ENCODE measurements at regions of chr1 and their contacts with region 1.

Region 1: GRCh38 chr1:217673387-217673786 is 42.2 kb downstream of the SPATA17 start:
- H3K4me3 Mint-ChIP-seq: no peak overlapping the region
- H3K27ac Mint-ChIP-seq: peak overlapping the region; percentile 74
- H3K4me1 Mint-ChIP-seq: peaks cover 40% of the 10 kb centered on the region
- H3K27me3 Mint-ChIP-seq: peaks cover 4% of the 10 kb centered on the region

Region 2: GRCh38 chr1:217617126-217617525 is 56.3 kb before region 1 on chr1:
- intact Hi-C with region 1: loop called (anchors 5 kb)
- H3K4me3 Mint-ChIP-seq: no peak overlapping the region
- H3K27ac Mint-ChIP-seq: no peak overlapping the region
- H3K4me1 Mint-ChIP-seq: peaks cover 14% of the 10 kb centered on the region
- H3K27me3 Mint-ChIP-seq: no peaks in the 10 kb centered on the region

Region 3: GRCh38 chr1:217634711-217635110 is 38.7 kb before region 1 on chr1:
- intact Hi-C with region 1: no loop called
- H3K4me3 Mint-ChIP-seq: no peak overlapping the region
- H3K27ac Mint-ChIP-seq: no peak overlapping the region
- H3K4me1 Mint-ChIP-seq: peaks cover 13% of the 10 kb centered on the region
- H3K27me3 Mint-ChIP-seq: peaks cover 11% of the 10 kb centered on the region

Region 4: DNA sequence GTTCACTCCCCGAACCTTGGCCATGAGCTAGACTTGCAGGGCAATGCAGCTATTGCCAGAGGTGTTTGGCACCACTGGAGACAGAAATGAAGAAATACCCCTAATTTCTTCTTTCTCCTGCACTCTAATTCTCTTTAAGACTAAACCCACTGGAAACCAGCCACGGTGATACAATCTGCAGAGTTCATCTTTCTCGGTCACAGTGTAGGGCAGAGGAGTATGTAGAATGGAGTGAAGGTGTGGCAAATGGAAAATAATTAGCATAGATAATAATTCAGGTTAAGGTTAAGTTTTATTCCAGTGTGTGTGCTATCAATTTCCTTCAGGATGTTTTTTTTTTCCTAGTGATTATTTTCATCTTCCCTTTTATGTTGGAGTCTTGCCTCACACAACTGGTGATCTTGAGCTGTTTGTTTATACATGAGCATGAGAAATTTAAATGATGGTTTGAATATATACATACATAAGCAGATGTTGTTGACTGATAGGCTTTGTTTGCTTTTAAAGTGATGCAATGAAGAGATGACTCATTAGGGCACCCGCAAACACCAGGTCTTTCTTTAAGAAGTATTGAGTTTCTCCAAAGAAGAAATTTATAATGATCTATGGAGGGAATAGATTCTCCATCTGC is 39.7 kb after region 1 on chr1:
- intact Hi-C with region 1: no loop called
- H3K4me3 Mint-ChIP-seq: no peak overlapping the region
- H3K27ac Mint-ChIP-seq: no peak overlapping the region
- H3K4me1 Mint-ChIP-seq: no peaks in the 10 kb centered on the region
- H3K27me3 Mint-ChIP-seq: no peaks in the 10 kb centered on the region

Measured in dendritic cell treated with granulocyte-macrophage colony-stimulating factor and Interleukin-4, amounts not matched to agents 40 ng/mL and 50 ng/mL, for 4 days (primary cell).